ENCODE measurements at regions of chr14 and their contacts with region 1.

Region 1: DNA sequence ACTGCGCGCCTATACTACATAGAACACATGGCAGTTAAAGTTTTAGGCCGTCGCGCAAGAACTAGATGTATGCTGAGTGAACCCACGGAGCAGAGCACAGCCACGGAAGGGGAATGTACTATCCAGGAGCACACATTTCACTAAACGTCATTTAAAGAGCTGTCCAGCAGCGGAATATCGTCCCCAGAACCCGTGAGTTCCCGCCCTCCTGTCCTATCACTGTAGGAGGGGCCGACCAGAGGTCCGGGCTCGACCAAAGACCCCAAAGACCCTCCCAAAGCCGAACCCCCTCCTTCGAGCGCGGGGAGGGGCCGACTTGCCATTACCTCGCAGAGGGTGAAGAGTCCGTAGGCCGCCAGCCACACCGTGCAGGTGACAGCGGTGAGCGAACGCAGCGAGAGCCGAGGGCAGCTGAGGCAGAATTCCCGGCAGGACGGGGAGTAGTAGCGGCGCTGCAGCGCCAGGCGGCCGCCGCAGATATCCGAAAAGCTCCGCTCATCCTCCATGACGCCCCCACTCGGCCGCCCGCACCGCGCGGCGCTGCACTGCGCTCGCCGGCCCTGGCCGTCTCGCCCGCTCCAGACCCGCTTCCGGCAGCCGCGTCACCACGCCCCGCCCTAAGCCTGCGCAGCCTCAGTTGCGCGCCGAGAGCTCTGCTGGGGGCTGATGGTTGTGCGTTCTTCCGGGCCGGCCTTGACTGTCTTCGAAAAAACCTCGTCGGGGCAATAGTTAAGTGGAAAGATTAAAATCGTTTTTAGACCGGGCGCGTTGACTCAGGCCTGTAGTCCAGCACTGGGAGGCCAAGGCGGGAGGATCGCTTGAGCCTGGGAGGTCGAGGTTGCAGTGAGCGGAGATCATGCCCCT is at the start of gene PIGH:
- DNase-seq: peak; percentile 90 to 97 (median 94)
- ATAC-seq: peak; percentile 97
- H3K4me3 ChIP-seq: peak within 1 kb of the TSS; percentile 92 to 99
- H3K4me3 Mint-ChIP-seq: peak within 1 kb of the TSS; percentile 98
- H3K27ac ChIP-seq: peak within 1 kb of the TSS; percentile 74 to 87
- H3K27ac Mint-ChIP-seq: peak within 1 kb of the TSS; percentile 98
- H3K4me1 ChIP-seq: peaks cover 19% of the 10 kb centered on the region
- H3K4me1 Mint-ChIP-seq: peaks cover 49% of the 10 kb centered on the region
- H3K27me3 ChIP-seq: no peaks in the 10 kb centered on the region
- H3K27me3 Mint-ChIP-seq: no peaks in the 10 kb centered on the region
- CTCF ChIP-seq: peak; percentile 52
- total RNA-seq, gene PIGH: 66.0 to 67.8 TPM

Region 2: GRCh38 chr14:65650826-65651225 is 1949.1 kb before region 1 on chr14:
- CTCF ChIA-PET with region 1: no interaction called
- POLR2A ChIA-PET with region 1: no interaction called
- intact Hi-C with region 1: no loop called
- DNase-seq: no peak
- ATAC-seq: no peak
- H3K4me3 ChIP-seq: no peak overlapping the region
- H3K4me3 Mint-ChIP-seq: no peak overlapping the region
- H3K27ac ChIP-seq: no peak overlapping the region
- H3K27ac Mint-ChIP-seq: no peak overlapping the region
- H3K4me1 ChIP-seq: no peaks in the 10 kb centered on the region
- H3K4me1 Mint-ChIP-seq: no peaks in the 10 kb centered on the region
- H3K27me3 ChIP-seq: no peaks in the 10 kb centered on the region
- H3K27me3 Mint-ChIP-seq: no peaks in the 10 kb centered on the region
- CTCF ChIP-seq: no peak

Region 3: DNA sequence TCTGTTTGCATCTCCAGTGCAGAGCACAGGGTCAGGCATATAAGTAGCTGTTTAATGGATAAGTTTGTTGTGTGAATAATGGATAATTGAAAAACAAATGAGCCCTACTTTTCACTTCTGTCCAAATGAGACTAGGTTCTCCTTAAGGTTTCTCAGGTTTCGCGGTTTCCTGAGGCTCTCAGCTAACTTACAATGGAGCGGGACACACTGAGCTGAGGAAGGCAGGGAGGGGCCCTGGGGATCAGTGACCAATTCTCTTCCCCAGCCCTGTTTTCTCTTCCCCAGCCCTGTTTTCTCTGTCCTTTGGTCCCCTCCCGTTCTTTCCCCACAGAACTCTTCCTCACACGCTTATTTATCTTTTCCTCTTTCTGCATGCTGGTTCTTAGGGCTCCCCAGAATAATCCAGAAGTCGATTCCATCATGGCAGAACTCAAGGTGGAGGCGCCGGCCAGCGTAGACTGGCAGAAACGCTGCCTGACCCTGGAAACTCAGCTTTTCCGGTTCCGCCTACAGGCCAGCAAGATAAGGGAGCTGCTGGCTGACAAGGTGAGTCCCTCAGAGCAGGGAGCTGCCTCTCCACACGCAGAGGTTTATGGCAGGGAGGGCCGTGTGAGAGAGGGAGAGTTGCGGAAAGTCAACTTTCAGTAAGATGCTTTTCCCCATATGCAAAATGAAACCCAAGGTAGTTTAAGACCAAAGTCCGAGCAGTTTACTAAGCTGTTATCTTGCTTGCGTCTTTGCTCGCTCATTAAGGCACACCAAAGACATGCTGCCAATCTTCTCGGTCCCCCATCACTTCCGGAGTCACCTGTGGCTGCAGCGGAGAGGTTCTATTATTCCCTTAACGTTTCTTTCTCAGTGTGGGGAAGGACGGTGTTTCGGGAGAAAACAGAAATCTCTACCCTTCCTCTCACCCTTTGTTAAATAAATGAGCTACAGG is 58.2 kb before region 1 on chr14:
- CTCF ChIA-PET with region 1: no interaction called
- POLR2A ChIA-PET with region 1: no interaction called
- intact Hi-C with region 1: no loop called
- DNase-seq: peak in 4 of 9 experiments; percentile 8 to 58 (median 14)
- ATAC-seq: no peak
- H3K4me3 ChIP-seq: peak overlapping the region; percentile 7 to 40
- H3K4me3 Mint-ChIP-seq: peak overlapping the region; percentile 81
- H3K27ac ChIP-seq: no peak overlapping the region
- H3K27ac Mint-ChIP-seq: no peak overlapping the region
- H3K4me1 ChIP-seq: no peaks in the 10 kb centered on the region
- H3K4me1 Mint-ChIP-seq: peaks cover 9% of the 10 kb centered on the region
- H3K27me3 ChIP-seq: no peaks in the 10 kb centered on the region
- H3K27me3 Mint-ChIP-seq: peaks cover 18% of the 10 kb centered on the region
- CTCF ChIP-seq: no peak

Region 4: DNA sequence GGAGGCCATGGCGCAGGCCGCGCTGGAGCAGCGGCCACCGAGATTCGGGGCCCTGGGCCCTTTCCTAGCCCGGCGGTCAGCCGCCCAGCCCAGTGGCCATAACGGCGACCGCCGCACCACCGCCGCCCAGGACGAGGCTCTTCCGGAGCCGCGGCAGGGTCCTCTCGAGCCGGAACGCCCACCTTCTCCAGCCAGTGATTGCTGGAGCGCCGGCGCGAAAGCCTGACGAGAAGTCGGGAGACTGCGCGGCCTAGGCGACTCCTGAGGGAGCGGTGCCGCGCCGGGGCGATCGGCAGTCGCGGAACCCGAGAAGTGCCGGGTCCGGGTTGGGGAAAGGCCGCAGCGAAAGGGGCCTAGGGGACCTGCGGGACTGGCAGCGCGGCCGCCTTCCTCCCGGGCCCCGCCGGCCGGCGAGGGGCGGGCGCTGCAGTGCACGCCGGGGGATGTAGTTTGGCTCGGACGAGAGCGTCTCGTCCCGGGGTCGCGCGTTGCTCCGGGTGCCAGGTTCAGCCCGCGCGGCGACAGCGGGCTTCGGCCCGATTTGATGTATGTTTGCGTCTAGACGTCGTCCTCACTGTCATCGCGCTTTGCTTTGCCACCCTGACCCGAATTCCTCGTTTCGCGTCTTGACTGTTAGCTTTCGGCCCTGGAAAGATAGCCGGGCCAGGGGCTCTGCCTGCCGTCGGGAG is 74.7 kb after region 1 on chr14 and contains the start of gene VTI1B:
- CTCF ChIA-PET with region 1: interaction called, 3 read pairs
- POLR2A ChIA-PET with region 1: interaction called, 5 read pairs
- intact Hi-C with region 1: loop called (anchors 1 to 2 kb)
- DNase-seq: peak; percentile 64 to 89 (median 79)
- ATAC-seq: peak; percentile 92
- H3K4me3 ChIP-seq: peak within 1 kb of the TSS; percentile 78 to 82
- H3K4me3 Mint-ChIP-seq: peak within 1 kb of the TSS; percentile 94
- H3K27ac ChIP-seq: peak within 1 kb of the TSS; percentile 93 to 95
- H3K27ac Mint-ChIP-seq: peak within 1 kb of the TSS; percentile 93
- H3K4me1 ChIP-seq: peaks cover 32% of the 10 kb centered on the region
- H3K4me1 Mint-ChIP-seq: peaks cover 39% of the 10 kb centered on the region
- H3K27me3 ChIP-seq: no peaks in the 10 kb centered on the region
- H3K27me3 Mint-ChIP-seq: no peaks in the 10 kb centered on the region
- CTCF ChIP-seq: no peak
- total RNA-seq, gene VTI1B: 27.6 to 31.1 TPM

Region 5: GRCh38 chr14:67738740-67739504 is 139.0 kb after region 1 on chr14:
- CTCF ChIA-PET with region 1: no interaction called
- POLR2A ChIA-PET with region 1: no interaction called
- intact Hi-C with region 1: no loop called
- DNase-seq: peak in 2 of 9 experiments; percentile 9 to 26
- ATAC-seq: no peak
- H3K4me3 ChIP-seq: no peak overlapping the region
- H3K4me3 Mint-ChIP-seq: no peak overlapping the region
- H3K27ac ChIP-seq: no peak overlapping the region
- H3K27ac Mint-ChIP-seq: no peak overlapping the region
- H3K4me1 ChIP-seq: no peaks in the 10 kb centered on the region
- H3K4me1 Mint-ChIP-seq: no peaks in the 10 kb centered on the region
- H3K27me3 ChIP-seq: no peaks in the 10 kb centered on the region
- H3K27me3 Mint-ChIP-seq: no peaks in the 10 kb centered on the region
- CTCF ChIP-seq: no peak